ENCODE measurements at regions of chr5 and their contacts with region 1.

Region 1: GRCh38 chr5:128083033-128083810 is at the start of gene SLC12A2:
- DNase-seq: peak; percentile 87 to 88
- H3K4me3 ChIP-seq: peak within 1 kb of the TSS; percentile 97
- H3K27ac ChIP-seq: peak within 1 kb of the TSS; percentile 71
- H3K4me1 ChIP-seq: peaks cover 60% of the 10 kb centered on the region
- H3K27me3 ChIP-seq: no peaks in the 10 kb centered on the region
- CTCF ChIP-seq: no peak
- total RNA-seq, gene SLC12A2: 24.4 and 29.3 TPM in 2 replicates

Region 2: DNA sequence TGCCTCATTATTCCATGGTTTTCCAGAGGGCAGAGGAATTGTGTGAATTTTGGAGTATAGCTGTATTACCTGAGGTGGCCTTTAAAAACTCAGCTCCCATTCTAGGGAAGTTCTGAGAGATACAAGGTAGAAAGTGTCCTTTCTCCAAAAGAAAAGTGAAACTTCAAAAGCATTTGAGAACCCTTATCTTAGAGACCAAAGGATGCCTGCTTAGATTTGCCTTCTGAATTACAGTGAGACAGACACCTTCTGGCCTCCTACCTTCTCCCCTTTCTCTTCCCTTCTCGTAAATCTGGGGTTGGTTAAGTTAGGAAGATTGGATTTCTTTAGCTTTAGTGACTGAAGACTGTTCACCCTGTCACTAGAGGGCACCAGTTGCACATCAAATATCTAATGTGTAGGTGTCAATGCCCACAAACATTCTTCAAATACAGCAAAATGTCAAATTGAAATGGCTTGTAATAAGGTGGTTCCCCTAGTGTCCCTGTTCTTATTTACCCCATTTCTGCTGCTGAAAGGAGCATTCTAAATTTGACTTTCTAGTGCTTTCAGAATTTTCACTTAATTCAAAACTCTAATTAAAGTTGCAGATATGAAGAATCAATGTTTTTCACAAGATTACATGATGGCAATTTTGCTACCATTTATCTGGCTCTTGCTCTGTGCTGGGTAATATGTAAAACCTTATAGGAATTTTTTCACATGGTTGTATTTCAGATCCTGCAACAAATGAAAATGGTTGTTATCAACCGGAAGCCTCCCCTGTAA is 519.0 kb before region 1 on chr5:
- CTCF ChIA-PET with region 1: no interaction called
- POLR2A ChIA-PET with region 1: no interaction called
- intact Hi-C with region 1: loop called (anchors 5 kb)
- DNase-seq: peak; percentile 34 to 63
- H3K4me3 ChIP-seq: no peak overlapping the region
- H3K27ac ChIP-seq: no peak overlapping the region
- H3K4me1 ChIP-seq: no peaks in the 10 kb centered on the region
- H3K27me3 ChIP-seq: no peaks in the 10 kb centered on the region
- CTCF ChIP-seq: peak; percentile 79

Region 3: GRCh38 chr5:127892467-127893207 is 190.6 kb before region 1 on chr5:
- CTCF ChIA-PET with region 1: interaction called, 6 read pairs
- POLR2A ChIA-PET with region 1: no interaction called
- intact Hi-C with region 1: loop called (anchors 5 kb)
- DNase-seq: peak; percentile 35 to 80
- H3K4me3 ChIP-seq: no peak overlapping the region
- H3K27ac ChIP-seq: peak overlapping the region; percentile 75
- H3K4me1 ChIP-seq: peaks cover 23% of the 10 kb centered on the region
- H3K27me3 ChIP-seq: no peaks in the 10 kb centered on the region
- CTCF ChIP-seq: no peak

Region 4: GRCh38 chr5:127988146-127988760 is 95.0 kb before region 1 on chr5:
- CTCF ChIA-PET with region 1: interaction called, 17 read pairs
- POLR2A ChIA-PET with region 1: no interaction called
- intact Hi-C with region 1: loop called (anchors 2 kb)
- DNase-seq: peak; percentile 53 to 81
- H3K4me3 ChIP-seq: no peak overlapping the region
- H3K27ac ChIP-seq: peak overlapping the region; percentile 49
- H3K4me1 ChIP-seq: peaks cover 14% of the 10 kb centered on the region
- H3K27me3 ChIP-seq: no peaks in the 10 kb centered on the region
- CTCF ChIP-seq: no peak

Region 5: DNA sequence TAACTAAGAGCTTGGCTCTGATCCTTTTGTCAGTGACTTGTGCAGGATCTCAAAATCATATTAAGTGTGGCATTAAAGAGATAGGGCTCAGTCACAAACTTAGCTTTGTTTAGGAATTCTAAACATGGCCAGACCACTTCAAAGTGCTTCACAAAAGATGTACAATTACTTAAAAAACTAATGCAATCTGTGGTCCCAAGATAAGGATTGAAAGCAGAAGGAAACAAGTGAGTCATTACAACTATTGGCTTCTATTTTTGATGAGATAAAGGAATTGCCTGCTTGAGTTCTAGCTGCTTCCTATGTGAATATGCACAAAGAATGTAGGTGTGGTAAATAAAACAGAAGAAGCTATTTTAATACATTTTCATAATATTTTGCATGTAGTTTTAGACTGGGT is 44.6 kb before region 1 on chr5:
- CTCF ChIA-PET with region 1: no interaction called
- POLR2A ChIA-PET with region 1: interaction called, 9 read pairs
- intact Hi-C with region 1: loop called (anchors 2 kb)
- DNase-seq: peak in 1 of 2 experiments; percentile 91
- H3K4me3 ChIP-seq: no peak overlapping the region
- H3K27ac ChIP-seq: peak overlapping the region; percentile 72
- H3K4me1 ChIP-seq: peaks cover 35% of the 10 kb centered on the region
- H3K27me3 ChIP-seq: no peaks in the 10 kb centered on the region
- CTCF ChIP-seq: no peak

Measured in PC-9 (cell line).